CD4-positive, alpha-beta memory T cell (primary cell): ENCODE measurements at regions of chr9 and their contacts with region 1.

Region 1: GRCh38 chr9:20622330-20623020 is at the start of gene MLLT3:
- DNase-seq: peak; percentile 95 to 97 (median 97)
- H3K4me3 ChIP-seq: peak within 1 kb of the TSS; percentile 68 to 93
- H3K4me3 Mint-ChIP-seq: peak within 1 kb of the TSS; percentile 95 to 100 (median 99)
- H3K27ac ChIP-seq: peak within 1 kb of the TSS; percentile 69
- H3K27ac Mint-ChIP-seq: peak within 1 kb of the TSS; percentile 96 to 99 (median 98)
- H3K4me1 ChIP-seq: peaks cover 42% of the 10 kb centered on the region
- H3K4me1 Mint-ChIP-seq: peaks cover 35 to 71% (median 40%) of the 10 kb centered on the region in 4 donors
- H3K27me3 ChIP-seq: no peaks in the 10 kb centered on the region
- H3K27me3 Mint-ChIP-seq: peaks cover 0 to 2% of the 10 kb centered on the region in 2 donors
- total RNA-seq, gene MLLT3: 52.5 to 54.4 TPM

Region 2: GRCh38 chr9:19379697-19380046 is 1242.8 kb before region 1 on chr9:
- CTCF ChIA-PET with region 1: no interaction called
- POLR2A ChIA-PET with region 1: no interaction called
- intact Hi-C with region 1: loop called (anchors 5 kb)
- DNase-seq: peak in 1 of 5 donors; percentile 63
- H3K4me3 ChIP-seq: peak overlapping the region; percentile 64 to 71
- H3K4me3 Mint-ChIP-seq: peak overlapping the region; percentile 97 to 99 (median 98)
- H3K27ac ChIP-seq: peak overlapping the region; percentile 83
- H3K27ac Mint-ChIP-seq: peak overlapping the region; percentile 96 to 100 (median 99)
- H3K4me1 ChIP-seq: peaks cover 36% of the 10 kb centered on the region
- H3K4me1 Mint-ChIP-seq: peaks cover 36 to 44% (median 40%) of the 10 kb centered on the region in 4 donors
- H3K27me3 ChIP-seq: no peaks in the 10 kb centered on the region
- H3K27me3 Mint-ChIP-seq: no peaks in the 10 kb centered on the region

Region 3: DNA sequence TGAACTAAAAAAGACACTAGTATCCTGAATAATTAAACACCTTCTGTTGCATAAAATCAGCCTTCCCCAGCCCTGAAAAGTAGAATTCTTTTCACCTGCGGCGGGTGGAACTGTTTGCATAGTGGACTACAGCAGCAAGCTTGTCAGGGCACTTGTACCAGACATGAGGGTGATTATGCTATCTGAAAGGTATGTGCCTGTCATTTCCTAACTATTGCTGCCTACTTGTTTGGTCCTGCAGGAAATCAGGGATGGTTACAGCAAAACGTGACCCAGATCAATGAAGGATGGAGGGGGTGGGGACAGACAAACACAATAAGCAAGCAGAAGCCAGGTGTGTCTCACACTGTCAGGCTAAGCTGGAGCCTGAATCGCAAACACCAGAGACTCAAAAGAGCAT is 385.8 kb before region 1 on chr9:
- CTCF ChIA-PET with region 1: no interaction called
- POLR2A ChIA-PET with region 1: no interaction called
- intact Hi-C with region 1: loop called (anchors 5 kb)
- DNase-seq: no peak
- H3K4me3 ChIP-seq: no peak overlapping the region
- H3K4me3 Mint-ChIP-seq: peak overlapping the region in 1 of 8 donors; percentile 9
- H3K27ac ChIP-seq: no peak overlapping the region
- H3K27ac Mint-ChIP-seq: no peak overlapping the region
- H3K4me1 ChIP-seq: peaks cover 4% of the 10 kb centered on the region
- H3K4me1 Mint-ChIP-seq: peaks cover 7 to 62% (median 10%) of the 10 kb centered on the region in 4 donors
- H3K27me3 ChIP-seq: no peaks in the 10 kb centered on the region
- H3K27me3 Mint-ChIP-seq: no peaks in the 10 kb centered on the region

Region 4: GRCh38 chr9:20552874-20553575 is 69.5 kb before region 1 on chr9:
- CTCF ChIA-PET with region 1: interaction called, 4 read pairs
- POLR2A ChIA-PET with region 1: interaction called, 7 read pairs
- intact Hi-C with region 1: loop called (anchors 1 kb)
- DNase-seq: peak in 2 of 5 donors; percentile 5 to 16
- H3K4me3 ChIP-seq: no peak overlapping the region
- H3K4me3 Mint-ChIP-seq: peak overlapping the region in 7 of 8 donors; percentile 0 to 48 (median 26)
- H3K27ac ChIP-seq: no peak overlapping the region
- H3K27ac Mint-ChIP-seq: peak overlapping the region in 4 of 7 donors; percentile 2 to 17 (median 6)
- H3K4me1 ChIP-seq: peaks cover 56% of the 10 kb centered on the region
- H3K4me1 Mint-ChIP-seq: peaks cover 54 to 72% (median 65%) of the 10 kb centered on the region in 4 donors
- H3K27me3 ChIP-seq: no peaks in the 10 kb centered on the region
- H3K27me3 Mint-ChIP-seq: no peaks in the 10 kb centered on the region

Region 5: DNA sequence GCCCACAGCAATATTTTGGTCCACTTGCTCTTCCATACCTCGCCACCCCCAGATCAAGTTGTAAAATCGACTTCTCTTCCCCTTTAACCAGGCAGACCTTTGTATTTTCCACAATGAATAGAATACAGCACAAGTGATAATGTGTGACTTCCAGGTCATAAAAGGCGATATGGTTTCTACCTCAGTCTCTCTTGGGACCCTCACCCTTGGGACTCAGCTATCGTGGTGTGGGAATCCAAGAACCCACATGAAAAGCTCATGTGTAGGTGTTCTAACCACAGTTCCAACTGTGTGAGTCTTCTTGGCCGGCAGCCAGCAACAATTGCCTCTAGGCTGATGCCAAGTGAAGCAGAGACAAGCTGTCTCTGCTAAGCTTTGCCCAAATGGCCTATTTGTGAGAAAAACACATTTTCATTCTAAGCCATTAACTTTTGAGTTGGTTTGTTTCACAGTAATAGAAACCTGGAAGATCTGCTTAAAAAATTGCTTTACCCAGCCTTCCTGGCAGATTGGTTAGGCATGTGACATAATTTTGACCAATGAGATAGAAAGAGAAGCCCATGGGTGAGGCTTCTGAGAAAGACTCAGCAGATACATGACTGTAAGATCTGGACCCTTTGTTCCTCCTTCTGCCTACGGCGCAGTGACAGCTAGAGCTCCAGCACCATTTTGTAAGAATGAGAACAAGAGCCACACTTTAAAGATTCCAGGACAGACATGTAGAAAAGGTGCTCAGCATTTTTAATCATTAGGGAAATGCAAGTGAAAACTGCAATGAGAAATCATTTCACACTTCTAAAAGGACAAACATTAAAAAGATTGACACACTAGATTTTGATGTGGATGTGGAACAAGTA is 18.1 kb after region 1 on chr9:
- CTCF ChIA-PET with region 1: interaction called, 13 read pairs
- POLR2A ChIA-PET with region 1: interaction called, 14 read pairs
- intact Hi-C with region 1: loop called (anchors 1 kb)
- DNase-seq: peak; percentile 71 to 85 (median 73)
- H3K4me3 ChIP-seq: no peak overlapping the region
- H3K4me3 Mint-ChIP-seq: peak overlapping the region in 7 of 8 donors; percentile 43 to 81 (median 63)
- H3K27ac ChIP-seq: no peak overlapping the region
- H3K27ac Mint-ChIP-seq: peak overlapping the region; percentile 17 to 81 (median 67)
- H3K4me1 ChIP-seq: peaks cover 18% of the 10 kb centered on the region
- H3K4me1 Mint-ChIP-seq: peaks cover 11 to 16% (median 13%) of the 10 kb centered on the region in 4 donors
- H3K27me3 ChIP-seq: no peaks in the 10 kb centered on the region
- H3K27me3 Mint-ChIP-seq: peaks cover 0 to 5% of the 10 kb centered on the region in 2 donors

Region 6: DNA sequence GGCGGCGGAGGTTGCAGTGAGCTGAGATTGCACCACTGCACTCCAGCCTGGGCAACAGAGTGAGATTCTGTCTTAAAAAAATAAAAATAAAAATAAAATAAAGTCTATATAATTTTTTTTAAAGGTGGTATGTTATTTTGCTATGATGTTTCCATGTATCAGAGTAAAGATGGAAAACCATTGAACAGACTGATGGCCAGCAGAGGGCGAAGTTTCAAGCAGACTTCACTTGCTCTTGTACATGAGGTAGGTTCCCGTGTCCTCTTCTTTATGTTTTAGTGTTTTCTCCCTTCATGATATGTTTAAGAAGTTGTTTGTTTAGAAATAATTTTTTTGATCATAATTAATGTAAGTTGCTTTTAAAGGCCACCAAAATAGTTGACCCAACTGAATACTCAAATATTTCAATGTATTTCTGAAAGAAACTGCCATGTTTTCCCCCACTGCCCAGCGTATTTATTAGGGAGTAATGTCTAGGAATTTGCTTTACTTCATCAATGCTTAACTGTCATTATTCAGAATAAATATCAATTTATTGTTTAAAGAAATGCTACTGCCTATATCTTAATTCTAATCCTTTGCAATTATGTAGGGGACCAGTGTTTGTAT is 262.6 kb after region 1 on chr9:
- CTCF ChIA-PET with region 1: interaction called, 33 read pairs
- POLR2A ChIA-PET with region 1: no interaction called
- intact Hi-C with region 1: loop called (anchors 1 kb)
- DNase-seq: peak; percentile 43 to 57 (median 50)
- H3K4me3 ChIP-seq: no peak overlapping the region
- H3K4me3 Mint-ChIP-seq: no peak overlapping the region
- H3K27ac ChIP-seq: no peak overlapping the region
- H3K27ac Mint-ChIP-seq: no peak overlapping the region
- H3K4me1 ChIP-seq: no peaks in the 10 kb centered on the region
- H3K4me1 Mint-ChIP-seq: no peaks in the 10 kb centered on the region
- H3K27me3 ChIP-seq: no peaks in the 10 kb centered on the region
- H3K27me3 Mint-ChIP-seq: no peaks in the 10 kb centered on the region

Region 7: GRCh38 chr9:21110708-21111576 is 488.5 kb after region 1 on chr9:
- CTCF ChIA-PET with region 1: interaction called, 21 read pairs
- POLR2A ChIA-PET with region 1: interaction called, 5 read pairs
- intact Hi-C with region 1: loop called (anchors 1 kb)
- DNase-seq: peak; percentile 43 to 67 (median 64)
- H3K4me3 ChIP-seq: no peak overlapping the region
- H3K4me3 Mint-ChIP-seq: no peak overlapping the region
- H3K27ac ChIP-seq: no peak overlapping the region
- H3K27ac Mint-ChIP-seq: no peak overlapping the region
- H3K4me1 ChIP-seq: no peaks in the 10 kb centered on the region
- H3K4me1 Mint-ChIP-seq: no peaks in the 10 kb centered on the region
- H3K27me3 ChIP-seq: no peaks in the 10 kb centered on the region
- H3K27me3 Mint-ChIP-seq: peaks cover 2 to 3% of the 10 kb centered on the region in 2 donors